ENCODE measurements at regions of chr2 and their contacts with region 1.

Region 1: DNA sequence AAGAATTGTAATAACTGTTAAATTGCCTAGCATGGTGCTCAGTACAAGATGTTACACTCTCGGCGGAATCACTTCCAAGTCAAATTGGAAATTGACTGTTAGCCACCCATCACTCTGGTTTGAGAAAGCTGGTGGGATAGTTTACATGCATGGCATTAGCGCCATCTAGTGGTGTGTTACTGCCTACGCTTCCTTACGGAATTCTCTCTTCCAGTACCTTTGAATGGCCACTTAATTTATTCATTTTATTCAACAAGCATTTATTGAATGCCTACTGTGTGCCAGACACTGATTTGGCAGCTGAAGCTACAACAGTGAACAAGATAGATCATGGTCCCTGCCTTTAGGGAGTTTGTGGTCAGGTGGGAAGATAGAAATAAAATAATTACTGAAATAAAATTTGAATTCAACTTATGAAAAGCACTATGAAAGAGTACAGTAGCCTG is 171.2 kb downstream of the TMEM247 start:
- DNase-seq: peak; percentile 64 to 86 (median 72)
- ATAC-seq: peak; percentile 92
- H3K4me3 ChIP-seq: no peak overlapping the region
- H3K27ac ChIP-seq: no peak overlapping the region
- H3K4me1 ChIP-seq: no peaks in the 10 kb centered on the region; a peak in 1 of 5 replicates
- H3K27me3 ChIP-seq: peaks cover 13 to 18% of the 10 kb centered on the region in 2 experiments; a peak in 3 of 5 replicates
- CTCF ChIP-seq: peak; percentile 82 to 97 (median 87)
- EP300 ChIP-seq: no peak
- POLR2A ChIP-seq: no peak
- RAD21 ChIP-seq: peak; percentile 92 to 96

Region 2: GRCh38 chr2:45986519-45986918 is 664.1 kb before region 1 on chr2:
- CTCF ChIA-PET with region 1: no interaction called
- POLR2A ChIA-PET with region 1: no interaction called
- in situ Hi-C with region 1: loop called (anchors 5 kb)
- intact Hi-C with region 1: loop called (anchors 5 kb)
- DNase-seq: no peak
- ATAC-seq: no peak
- H3K4me3 ChIP-seq: no peak overlapping the region
- H3K27ac ChIP-seq: no peak overlapping the region
- H3K4me1 ChIP-seq: no peaks in the 10 kb centered on the region
- H3K27me3 ChIP-seq: peaks cover 15 to 74% of the 10 kb centered on the region in 2 experiments
- CTCF ChIP-seq: no peak
- EP300 ChIP-seq: no peak
- POLR2A ChIP-seq: no peak
- RAD21 ChIP-seq: no peak

Region 3: DNA sequence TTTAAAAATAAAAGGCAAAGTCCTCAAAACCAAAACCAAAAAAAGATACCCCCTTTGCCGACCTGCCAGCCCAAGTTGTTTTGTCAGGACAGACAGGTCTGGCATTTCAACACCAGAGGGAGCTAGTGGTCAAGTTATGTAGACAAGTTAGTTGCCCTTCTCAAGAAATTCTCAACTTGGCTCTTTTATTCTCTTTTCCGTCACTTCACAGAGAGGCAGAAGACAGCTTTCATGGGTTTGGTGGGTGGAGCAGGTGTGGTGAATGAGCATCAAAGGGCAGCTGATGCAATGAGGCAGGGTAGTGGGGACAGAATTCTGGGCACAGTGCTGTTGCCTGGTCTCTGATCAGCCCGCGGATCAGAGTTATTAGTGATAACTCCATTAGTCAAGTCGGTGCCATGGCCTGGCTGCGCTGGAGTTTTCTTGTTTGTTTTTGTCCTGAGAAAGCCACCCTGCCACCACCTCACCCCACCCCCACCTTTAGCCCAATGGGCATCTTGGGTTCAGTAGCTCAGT is 657.0 kb before region 1 on chr2:
- CTCF ChIA-PET with region 1: no interaction called
- POLR2A ChIA-PET with region 1: no interaction called
- in situ Hi-C with region 1: loop called (anchors 5 kb)
- intact Hi-C with region 1: loop called (anchors 5 kb)
- DNase-seq: peak; percentile 60 to 77 (median 66)
- ATAC-seq: peak; percentile 81
- H3K4me3 ChIP-seq: no peak overlapping the region
- H3K27ac ChIP-seq: no peak overlapping the region
- H3K4me1 ChIP-seq: no peaks in the 10 kb centered on the region
- H3K27me3 ChIP-seq: peaks cover 0 to 20% of the 10 kb centered on the region in 2 experiments; a peak in 2 of 5 replicates
- CTCF ChIP-seq: peak; percentile 62 to 81 (median 76)
- EP300 ChIP-seq: no peak
- POLR2A ChIP-seq: no peak
- RAD21 ChIP-seq: peak; percentile 85 to 87

Region 4: GRCh38 chr2:46461011-46461674 is 189.4 kb before region 1 on chr2:
- CTCF ChIA-PET with region 1: interaction called, 15 read pairs
- POLR2A ChIA-PET with region 1: interaction called, 3 read pairs
- in situ Hi-C with region 1: no loop called
- intact Hi-C with region 1: no loop called
- DNase-seq: peak; percentile 76 to 84 (median 82)
- ATAC-seq: peak; percentile 83
- H3K4me3 ChIP-seq: no peak overlapping the region
- H3K27ac ChIP-seq: no peak overlapping the region; the same call in 2 of the 3 replicates
- H3K4me1 ChIP-seq: peaks cover 8 to 10% of the 10 kb centered on the region in 2 experiments; a peak in 4 of 5 replicates
- H3K27me3 ChIP-seq: no peaks in the 10 kb centered on the region
- CTCF ChIP-seq: peak; percentile 94 to 98 (median 97)
- EP300 ChIP-seq: no peak
- POLR2A ChIP-seq: no peak
- RAD21 ChIP-seq: peak; percentile 97 to 98

Region 5: DNA sequence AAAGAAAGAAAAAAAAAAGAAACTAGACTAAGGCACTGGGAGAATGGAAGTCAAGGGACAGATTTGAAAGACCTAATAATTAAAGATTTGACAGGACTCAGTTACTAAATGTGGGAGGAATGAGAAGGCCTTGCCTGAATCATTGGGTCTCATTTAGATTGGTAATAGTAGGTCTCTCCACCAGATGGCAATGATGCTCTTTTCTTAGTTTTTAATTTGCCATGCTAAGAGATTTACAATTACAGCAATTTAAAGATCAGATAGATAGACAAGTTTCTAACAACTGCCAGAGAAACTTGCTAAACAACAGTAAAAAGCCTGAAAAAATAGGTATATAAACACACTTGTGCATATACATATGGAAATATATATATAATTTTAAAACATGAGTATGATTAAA is 18.2 kb before region 1 on chr2:
- CTCF ChIA-PET with region 1: interaction called, 6 read pairs
- POLR2A ChIA-PET with region 1: interaction called, 11 read pairs
- in situ Hi-C with region 1: no loop called
- intact Hi-C with region 1: no loop called
- DNase-seq: peak; percentile 14 to 23 (median 18)
- ATAC-seq: peak; percentile 64; the same call in 2 of the 3 replicates
- H3K4me3 ChIP-seq: no peak overlapping the region
- H3K27ac ChIP-seq: no peak overlapping the region
- H3K4me1 ChIP-seq: no peaks in the 10 kb centered on the region
- H3K27me3 ChIP-seq: no peaks in the 10 kb centered on the region
- CTCF ChIP-seq: peak; percentile 33 to 50 (median 35); a peak in 3 of 6 replicates
- EP300 ChIP-seq: no peak
- POLR2A ChIP-seq: no peak
- RAD21 ChIP-seq: peak; percentile 47 to 66

Region 6: DNA sequence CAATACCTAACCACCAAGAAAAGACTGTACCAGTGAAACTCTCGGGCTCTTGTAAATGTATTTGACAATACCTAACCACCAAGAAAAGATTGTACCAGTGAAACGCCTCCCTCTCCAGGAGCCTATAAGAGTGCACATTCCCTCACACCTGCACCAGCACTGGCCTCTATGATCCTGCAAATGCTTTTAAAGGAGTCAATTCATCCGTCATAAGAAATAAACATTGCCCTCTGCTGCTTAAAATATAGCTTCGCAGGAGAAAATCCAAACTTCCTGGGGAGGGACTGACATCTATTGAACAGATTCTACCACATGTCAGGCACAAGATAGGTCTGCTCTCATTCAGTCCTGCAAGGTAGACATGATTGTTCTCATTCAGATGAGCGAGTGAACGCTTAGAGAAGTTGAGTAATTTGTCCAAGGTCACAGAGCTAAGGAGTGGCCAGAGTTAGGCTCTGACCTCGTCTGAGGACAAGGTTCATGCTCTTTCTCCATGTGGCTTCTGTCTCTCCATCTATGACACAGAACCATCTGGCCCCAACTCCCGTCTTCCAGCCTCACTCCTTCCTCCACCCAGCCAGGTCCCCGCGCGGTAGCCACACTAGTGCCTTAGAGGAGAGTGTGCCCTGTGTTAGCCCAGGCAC is 226.3 kb after region 1 on chr2:
- CTCF ChIA-PET with region 1: no interaction called
- POLR2A ChIA-PET with region 1: no interaction called
- in situ Hi-C with region 1: no loop called
- intact Hi-C with region 1: loop called (anchors 2 kb)
- DNase-seq: peak; percentile 54 to 79 (median 60)
- ATAC-seq: peak; percentile 80
- H3K4me3 ChIP-seq: no peak overlapping the region
- H3K27ac ChIP-seq: no peak overlapping the region
- H3K4me1 ChIP-seq: peaks cover 11 to 33% of the 10 kb centered on the region in 2 experiments
- H3K27me3 ChIP-seq: peaks cover 0 to 27% of the 10 kb centered on the region in 2 experiments; a peak in 4 of 5 replicates
- CTCF ChIP-seq: peak; percentile 64 to 95 (median 81)
- EP300 ChIP-seq: 0 out of 2 replicates have a peak, but pooled peaks have one; percentile 21
- POLR2A ChIP-seq: no peak
- RAD21 ChIP-seq: peak; percentile 83 to 89

Region 7: DNA sequence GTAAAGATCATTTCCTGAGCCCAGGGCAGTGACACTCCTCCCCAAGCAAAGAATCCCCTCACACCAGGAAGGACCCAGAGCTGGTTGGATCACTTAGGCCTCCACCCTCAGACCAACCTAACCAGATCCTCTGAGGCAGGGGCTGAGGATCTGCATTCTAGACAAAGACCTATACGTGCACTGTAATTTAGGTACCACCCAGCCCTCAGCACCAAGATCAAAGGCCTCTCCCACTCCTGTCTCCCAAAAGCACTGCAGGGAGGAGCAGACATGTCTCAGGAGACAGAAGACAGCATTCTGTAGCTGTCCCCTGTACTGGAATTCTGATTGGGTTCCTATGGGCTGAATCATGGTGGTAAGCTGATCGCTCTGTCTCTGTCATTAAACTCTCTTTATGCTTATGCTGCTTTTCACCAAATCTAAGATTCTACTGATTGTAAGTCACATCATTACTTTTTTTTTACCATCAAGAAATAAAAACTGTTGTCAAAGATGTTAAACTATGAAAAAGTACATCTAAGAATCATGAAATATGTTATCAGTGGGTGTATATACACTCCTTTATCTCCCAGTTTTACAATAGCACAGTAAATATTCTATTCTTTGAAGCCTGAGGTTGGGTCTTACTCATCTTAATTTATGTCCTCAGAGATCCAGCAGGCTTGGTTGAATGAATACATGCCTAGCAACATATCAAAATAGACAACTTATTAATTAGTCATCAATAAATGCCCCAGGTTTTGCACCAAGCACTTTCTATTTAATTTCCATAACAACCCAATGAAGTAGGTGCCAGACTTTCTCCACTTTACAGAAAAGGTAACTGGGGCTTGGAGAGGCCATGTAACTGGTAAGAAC is 236.7 kb after region 1 on chr2:
- CTCF ChIA-PET with region 1: interaction called, 3 read pairs
- POLR2A ChIA-PET with region 1: interaction called, 4 read pairs
- in situ Hi-C with region 1: loop called (anchors 5 kb)
- intact Hi-C with region 1: no loop called
- DNase-seq: no peak
- ATAC-seq: no peak
- H3K4me3 ChIP-seq: no peak overlapping the region
- H3K27ac ChIP-seq: no peak overlapping the region
- H3K4me1 ChIP-seq: no peaks in the 10 kb centered on the region
- H3K27me3 ChIP-seq: peaks cover 14 to 36% of the 10 kb centered on the region in 2 experiments
- CTCF ChIP-seq: no peak
- EP300 ChIP-seq: no peak
- POLR2A ChIP-seq: no peak
- RAD21 ChIP-seq: no peak